CD4-positive, alpha-beta memory T cell (primary cell): ENCODE measurements at regions of chr17 and their contacts with region 1.

Region 1: DNA sequence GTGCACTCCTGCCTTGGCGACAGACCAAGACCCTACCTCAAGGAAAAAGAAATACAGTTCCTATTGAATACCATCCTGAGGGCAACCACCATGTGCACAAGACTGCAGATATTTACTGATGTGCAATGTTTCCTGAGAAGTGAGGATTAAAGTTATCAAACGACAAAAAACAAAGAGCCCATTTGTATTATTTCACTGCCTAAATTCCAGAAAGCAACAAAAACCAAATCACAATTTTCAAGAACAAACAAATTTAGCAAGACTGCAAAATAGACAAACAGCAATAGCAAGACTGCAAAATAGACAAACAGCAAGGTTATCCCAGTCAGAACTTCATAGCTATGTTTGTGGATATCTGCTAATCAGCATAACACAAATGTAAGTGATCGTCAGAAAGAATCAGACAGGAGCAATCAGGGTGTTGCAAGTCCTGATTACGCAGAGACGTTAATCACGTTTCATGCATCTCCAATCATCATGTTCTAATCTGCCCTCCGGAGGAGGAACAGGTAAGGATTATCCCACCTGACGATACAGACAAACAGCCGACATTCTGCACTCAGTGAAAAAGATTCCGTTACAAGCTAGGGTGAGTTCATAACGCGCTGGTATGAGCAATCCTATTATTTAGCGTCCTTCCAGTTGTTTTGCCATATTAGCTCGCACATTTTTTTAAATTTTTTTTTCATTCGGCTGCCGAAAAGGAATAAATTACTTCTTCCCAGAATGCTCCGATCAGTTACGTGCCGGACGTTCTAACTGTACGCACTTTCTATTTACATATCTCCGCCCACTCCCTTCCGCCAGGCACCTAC is 2.9 kb downstream of the TMEM107 start:
- DNase-seq: peak; percentile 91 to 94 (median 92)
- H3K4me3 ChIP-seq: peak overlapping the region; percentile 12 to 52
- H3K4me3 Mint-ChIP-seq: peak overlapping the region; percentile 84 to 94 (median 90)
- H3K27ac ChIP-seq: peak overlapping the region; percentile 99
- H3K27ac Mint-ChIP-seq: peak overlapping the region; percentile 98 to 100 (median 100)
- H3K4me1 ChIP-seq: peaks cover 45% of the 10 kb centered on the region
- H3K4me1 Mint-ChIP-seq: peaks cover 30 to 61% (median 43%) of the 10 kb centered on the region in 4 donors
- H3K27me3 ChIP-seq: no peaks in the 10 kb centered on the region
- H3K27me3 Mint-ChIP-seq: no peaks in the 10 kb centered on the region

Region 2: DNA sequence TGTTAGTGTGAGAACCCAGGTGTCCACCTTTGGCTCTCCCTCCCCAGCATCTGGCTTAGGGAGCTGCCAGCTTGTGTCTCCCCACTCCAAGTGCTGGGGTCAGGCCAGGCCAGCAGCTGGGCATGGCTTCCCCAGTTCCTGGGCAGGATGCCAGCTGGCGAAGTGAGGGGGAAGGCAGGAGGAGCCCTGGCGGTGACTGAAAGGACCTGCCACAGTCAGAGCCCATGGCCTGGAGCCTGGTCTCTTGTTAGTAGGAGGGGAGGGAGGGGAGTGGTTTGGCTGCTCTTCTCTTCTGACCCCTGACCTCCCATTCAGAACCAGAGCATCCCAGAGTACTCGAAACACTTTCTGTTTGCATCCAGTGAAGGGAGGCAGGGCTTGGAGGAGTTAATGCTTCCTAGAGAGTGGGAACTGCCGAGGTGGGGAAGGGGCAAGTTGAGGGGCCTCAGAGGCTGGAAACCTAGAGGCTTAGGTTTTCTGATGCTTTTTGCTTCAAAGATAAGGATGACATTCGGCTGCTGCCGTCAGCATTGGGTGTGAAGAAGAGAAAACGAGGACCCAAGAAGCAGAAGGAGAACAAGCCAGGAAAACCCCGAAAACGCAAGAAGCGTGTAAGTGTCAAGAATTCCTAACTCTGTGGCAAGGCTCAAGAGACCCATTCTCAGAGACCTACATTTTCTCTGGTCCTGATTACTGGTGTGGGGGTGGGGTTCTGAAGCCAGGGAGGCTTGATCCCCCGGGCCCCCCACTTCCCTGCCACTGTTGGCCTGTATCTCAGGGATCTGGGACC is 283.9 kb before region 1 on chr17:
- CTCF ChIA-PET with region 1: no interaction called
- POLR2A ChIA-PET with region 1: no interaction called
- intact Hi-C with region 1: no loop called
- DNase-seq: peak in 2 of 5 donors; percentile 14 to 20
- H3K4me3 ChIP-seq: peak overlapping the region; percentile 86 to 96
- H3K4me3 Mint-ChIP-seq: peak overlapping the region in 3 of 8 donors; percentile 13 to 31 (median 17)
- H3K27ac ChIP-seq: peak overlapping the region; percentile 65
- H3K27ac Mint-ChIP-seq: peak overlapping the region in 4 of 7 donors; percentile 55 to 84 (median 69)
- H3K4me1 ChIP-seq: peaks cover 30% of the 10 kb centered on the region
- H3K4me1 Mint-ChIP-seq: peaks cover 8 to 11% (median 9%) of the 10 kb centered on the region in 4 donors
- H3K27me3 ChIP-seq: no peaks in the 10 kb centered on the region
- H3K27me3 Mint-ChIP-seq: no peaks in the 10 kb centered on the region

Region 3: DNA sequence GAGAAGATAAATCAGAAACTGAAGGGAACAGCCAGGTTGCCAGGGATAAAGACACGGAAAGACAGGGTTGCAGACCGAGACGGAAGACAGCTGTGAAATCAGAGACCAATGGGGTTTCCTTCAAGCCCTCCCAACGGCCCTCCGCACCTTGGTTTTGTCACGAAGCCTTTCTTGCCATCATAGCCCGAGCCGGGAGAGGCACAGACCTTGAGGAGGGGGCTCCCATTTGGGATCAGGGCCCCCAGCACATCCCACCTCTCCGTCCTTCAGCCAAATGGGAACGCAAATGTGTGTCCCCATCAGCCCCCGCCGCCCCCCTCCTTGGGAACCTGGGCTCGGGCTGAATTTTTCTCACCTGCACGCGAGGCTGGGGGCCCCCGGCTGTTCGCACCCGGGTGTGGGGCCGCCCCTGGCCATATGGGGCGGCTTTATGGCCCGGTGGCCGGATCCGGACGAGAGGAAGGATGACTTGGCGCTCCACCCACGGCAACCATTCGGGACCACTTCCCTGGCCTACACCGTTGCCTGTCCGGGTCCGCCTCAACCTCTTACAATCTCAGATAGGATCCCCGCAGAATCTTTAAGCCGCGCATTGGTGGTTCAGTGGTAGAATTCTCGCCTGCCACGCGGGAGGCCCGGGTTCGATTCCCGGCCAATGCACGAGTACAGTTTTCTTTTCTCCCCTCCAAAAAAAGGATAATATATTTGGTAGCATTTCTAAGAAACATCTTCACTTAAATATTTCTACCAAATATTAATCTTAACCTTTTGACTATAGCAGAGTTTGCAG is 47.9 kb before region 1 on chr17:
- CTCF ChIA-PET with region 1: interaction called, 6 read pairs
- POLR2A ChIA-PET with region 1: interaction called, 26 read pairs
- intact Hi-C with region 1: no loop called
- DNase-seq: peak; percentile 83 to 90 (median 87)
- H3K4me3 ChIP-seq: peak overlapping the region; percentile 53 to 68
- H3K4me3 Mint-ChIP-seq: peak overlapping the region; percentile 85 to 99 (median 92)
- H3K27ac ChIP-seq: no peak overlapping the region
- H3K27ac Mint-ChIP-seq: peak overlapping the region; percentile 69 to 100 (median 93)
- H3K4me1 ChIP-seq: peaks cover 63% of the 10 kb centered on the region
- H3K4me1 Mint-ChIP-seq: peaks cover 42 to 62% (median 51%) of the 10 kb centered on the region in 4 donors
- H3K27me3 ChIP-seq: peaks cover 20% of the 10 kb centered on the region
- H3K27me3 Mint-ChIP-seq: peaks cover 10 to 28% of the 10 kb centered on the region in 2 donors

Region 4: DNA sequence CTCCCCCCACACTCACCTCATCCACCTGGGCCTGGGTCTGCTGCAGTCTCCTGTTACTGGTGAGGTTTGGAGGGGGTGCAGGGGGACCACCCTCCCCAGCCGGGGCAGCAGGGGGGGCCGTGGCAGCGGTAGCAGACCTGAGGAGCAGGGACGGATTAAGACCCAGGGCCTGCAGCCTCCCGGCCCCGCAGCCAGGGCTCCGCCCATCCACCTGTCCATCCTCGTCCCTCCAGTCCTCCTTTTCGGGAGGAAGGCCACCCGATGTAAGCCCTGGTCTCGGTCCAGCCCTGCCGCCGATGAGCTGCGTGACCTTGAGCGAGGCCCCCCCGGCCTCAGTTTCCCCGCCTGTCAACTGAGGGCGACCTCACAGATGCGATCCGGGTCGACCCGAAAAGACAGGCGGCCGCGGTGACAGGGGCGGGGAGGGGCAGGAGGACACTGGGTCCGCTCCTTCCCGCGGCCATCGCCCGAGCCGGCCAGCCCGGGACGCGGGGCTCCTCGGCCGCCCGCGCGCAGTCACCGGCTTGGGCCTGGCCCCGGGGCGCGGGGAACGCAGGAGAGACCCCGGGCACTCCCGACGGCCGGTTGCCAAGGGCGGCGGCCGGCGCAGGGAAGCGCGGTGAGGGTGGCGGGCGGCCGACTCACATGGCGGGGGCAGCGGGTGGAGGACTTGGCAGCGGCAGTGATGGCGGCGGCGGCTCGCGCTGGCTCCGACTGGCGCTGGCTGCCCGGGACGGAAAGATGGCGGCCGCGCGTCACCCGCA is 10.8 kb before region 1 on chr17 and contains the start of gene VAMP2:
- CTCF ChIA-PET with region 1: interaction called, 11 read pairs
- POLR2A ChIA-PET with region 1: interaction called, 1,074 read pairs
- intact Hi-C with region 1: loop called (anchors 1 kb)
- DNase-seq: peak; percentile 84 to 90 (median 89)
- H3K4me3 ChIP-seq: peak within 1 kb of the TSS; percentile 80 to 98
- H3K4me3 Mint-ChIP-seq: peak within 1 kb of the TSS; percentile 91 to 93 (median 91)
- H3K27ac ChIP-seq: peak within 1 kb of the TSS; percentile 100
- H3K27ac Mint-ChIP-seq: peak within 1 kb of the TSS; percentile 95 to 99 (median 98)
- H3K4me1 ChIP-seq: peaks cover 68% of the 10 kb centered on the region
- H3K4me1 Mint-ChIP-seq: peaks cover 47 to 66% (median 53%) of the 10 kb centered on the region in 4 donors
- H3K27me3 ChIP-seq: no peaks in the 10 kb centered on the region
- H3K27me3 Mint-ChIP-seq: no peaks in the 10 kb centered on the region
- total RNA-seq, gene VAMP2: 190 to 203 TPM

Region 5: DNA sequence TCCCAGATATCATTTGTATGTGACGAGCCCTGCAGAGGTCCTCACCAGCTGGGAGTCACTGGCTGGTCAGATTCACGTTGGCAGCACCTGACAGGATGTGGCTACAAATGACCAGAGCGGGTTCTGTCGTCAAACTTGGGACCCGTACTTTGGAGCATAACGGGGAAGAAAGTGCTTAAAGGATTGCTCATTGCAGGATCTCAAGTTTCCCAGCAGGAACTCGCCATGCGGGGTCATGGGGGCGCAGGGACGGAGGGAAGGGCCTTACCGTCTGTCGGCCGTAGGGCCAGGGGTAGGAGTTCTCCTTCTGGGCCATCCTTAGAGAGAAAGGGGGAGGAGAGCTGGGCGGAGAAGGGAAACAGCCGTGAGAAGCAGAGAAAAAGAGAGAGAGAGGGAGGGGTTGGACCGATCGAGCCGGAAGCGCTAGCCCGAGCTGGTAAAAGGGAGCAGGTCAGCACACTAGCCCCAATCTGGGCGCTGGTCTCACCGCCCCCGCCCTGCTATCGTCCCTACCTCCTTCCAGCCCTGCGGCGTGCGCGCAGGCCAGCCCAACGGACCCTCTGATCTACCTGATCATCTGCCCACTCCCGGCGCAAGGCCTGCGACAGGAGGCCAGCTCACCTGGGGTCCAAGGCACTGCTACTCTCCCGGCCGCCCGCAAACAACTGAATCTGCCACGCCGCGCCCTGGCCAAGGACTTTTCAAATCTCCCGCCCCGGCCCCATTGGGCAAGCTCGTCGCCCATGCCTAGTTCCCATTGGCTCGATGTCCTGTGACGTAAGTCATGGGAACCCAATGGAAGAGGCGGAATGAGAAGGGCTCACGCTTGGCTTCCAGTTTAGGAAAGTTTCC is 36.9 kb after region 1 on chr17 and contains the start of gene AURKB:
- CTCF ChIA-PET with region 1: no interaction called
- POLR2A ChIA-PET with region 1: interaction called, 13 read pairs
- intact Hi-C with region 1: no loop called
- DNase-seq: peak; percentile 90 to 98 (median 90)
- H3K4me3 ChIP-seq: peak within 1 kb of the TSS; percentile 71 to 83
- H3K4me3 Mint-ChIP-seq: peak within 1 kb of the TSS; percentile 85 to 96 (median 92)
- H3K27ac ChIP-seq: peak within 1 kb of the TSS; percentile 69
- H3K27ac Mint-ChIP-seq: peak within 1 kb of the TSS; percentile 82 to 95 (median 94)
- H3K4me1 ChIP-seq: peaks cover 15% of the 10 kb centered on the region
- H3K4me1 Mint-ChIP-seq: peaks cover 13 to 21% (median 17%) of the 10 kb centered on the region in 4 donors
- H3K27me3 ChIP-seq: no peaks in the 10 kb centered on the region
- H3K27me3 Mint-ChIP-seq: no peaks in the 10 kb centered on the region
- total RNA-seq, gene AURKB: 0.67 to 0.83 TPM

Region 6: GRCh38 chr17:8294814-8295316 is 121.6 kb after region 1 on chr17:
- CTCF ChIA-PET with region 1: interaction called, 4 read pairs
- POLR2A ChIA-PET with region 1: interaction called, 18 read pairs
- intact Hi-C with region 1: no loop called
- DNase-seq: no peak
- H3K4me3 ChIP-seq: peak overlapping the region; percentile 78 to 92
- H3K4me3 Mint-ChIP-seq: peak overlapping the region; percentile 91 to 97 (median 94)
- H3K27ac ChIP-seq: peak overlapping the region; percentile 73
- H3K27ac Mint-ChIP-seq: peak overlapping the region; percentile 92 to 98 (median 96)
- H3K4me1 ChIP-seq: peaks cover 26% of the 10 kb centered on the region
- H3K4me1 Mint-ChIP-seq: peaks cover 18 to 50% (median 29%) of the 10 kb centered on the region in 4 donors
- H3K27me3 ChIP-seq: no peaks in the 10 kb centered on the region
- H3K27me3 Mint-ChIP-seq: no peaks in the 10 kb centered on the region